Thyroid gland (tissue), 4 donors: ENCODE measurements at regions of chr5 and their contacts with region 1.

Region 1: GRCh38 chr5:55159763-55160492 is at the start of gene GPX8:
- DNase-seq: peak; percentile 38 to 47
- H3K4me3 ChIP-seq: peak within 1 kb of the TSS in 2 of 3 donors; percentile 14 to 22
- H3K27ac ChIP-seq: peak within 1 kb of the TSS; percentile 59 to 81 (median 69)
- H3K4me1 ChIP-seq: no peaks in the 10 kb centered on the region
- H3K27me3 ChIP-seq: no peaks in the 10 kb centered on the region
- CTCF ChIP-seq: peak in 5 of 6 experiments; percentile 14 to 76 (median 52)
- POLR2A ChIP-seq: peak in 1 of 2 donors; percentile 57
- total RNA-seq, gene GPX8: 34.0 to 44.0 (median 36.8) TPM

Region 2: GRCh38 chr5:54905943-54906537 is 253.9 kb before region 1 on chr5:
- intact Hi-C with region 1: loop called (anchors 10 kb)
- DNase-seq: peak; percentile 65 to 77
- H3K4me3 ChIP-seq: no peak overlapping the region
- H3K27ac ChIP-seq: no peak overlapping the region
- H3K4me1 ChIP-seq: no peaks in the 10 kb centered on the region
- H3K27me3 ChIP-seq: no peaks in the 10 kb centered on the region
- CTCF ChIP-seq: peak in 5 of 6 experiments; percentile 25 to 67 (median 59)
- POLR2A ChIP-seq: no peak